Activated CD8-positive, alpha-beta memory T cell treated with anti-CD3 and anti-CD28 coated beads, Interleukin-2, amount 10 ng/mL, durations not matched to agents 7 days and 5 days (primary cell): ENCODE measurements at regions of chr12 and their contacts with region 1.

Region 1: DNA sequence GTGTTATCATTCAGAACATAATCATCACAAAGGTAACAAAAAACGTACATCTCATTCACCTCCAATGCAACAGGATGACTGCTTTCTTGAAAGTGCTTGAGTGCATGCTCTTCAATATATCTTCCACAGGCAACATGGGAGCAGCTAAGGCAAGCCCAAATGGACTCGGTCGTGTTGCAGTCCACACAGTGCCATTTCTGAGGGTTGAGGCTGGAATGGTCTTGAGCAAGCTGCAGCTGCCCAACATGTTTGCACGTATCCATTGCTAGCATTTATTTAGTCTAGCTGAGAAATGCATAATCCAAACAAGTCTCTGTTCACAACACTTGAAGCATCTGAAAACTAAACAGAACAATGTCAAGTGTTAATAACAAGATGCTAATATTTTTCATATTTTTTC is 17.3 kb downstream of the USP44 start:
- DNase-seq: no peak
- ATAC-seq: no peak
- H3K4me3 Mint-ChIP-seq: no peak overlapping the region
- H3K27ac Mint-ChIP-seq: no peak overlapping the region
- H3K4me1 Mint-ChIP-seq: peaks cover 2% of the 10 kb centered on the region
- H3K27me3 Mint-ChIP-seq: no peaks in the 10 kb centered on the region

Region 2: GRCh38 chr12:95117178-95117599 is 416.8 kb before region 1 on chr12:
- CTCF ChIA-PET with region 1: interaction called, 31 read pairs
- DNase-seq: peak; percentile 70
- ATAC-seq: peak; percentile 88
- H3K4me3 Mint-ChIP-seq: no peak overlapping the region
- H3K27ac Mint-ChIP-seq: no peak overlapping the region
- H3K4me1 Mint-ChIP-seq: peaks cover 10% of the 10 kb centered on the region
- H3K27me3 Mint-ChIP-seq: no peaks in the 10 kb centered on the region

Region 3: DNA sequence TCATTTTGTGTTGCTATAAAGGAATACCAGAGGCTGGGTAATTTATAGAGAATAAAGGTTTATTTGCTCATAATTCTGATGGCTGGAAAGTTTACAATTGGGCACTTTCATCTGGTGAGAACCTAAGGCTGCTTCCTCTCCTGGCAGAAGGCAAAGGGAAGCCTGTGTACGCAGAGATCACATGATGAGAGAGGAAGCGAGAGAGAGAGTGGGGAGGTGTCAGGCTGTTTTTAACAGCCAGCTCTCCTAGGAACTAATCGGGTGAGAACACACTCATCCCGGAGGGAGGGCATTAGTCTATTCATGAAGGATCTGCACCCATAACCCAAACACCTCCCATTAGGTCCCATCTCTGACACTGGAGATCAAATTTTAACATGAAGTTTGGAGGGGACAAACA is 105.5 kb before region 1 on chr12:
- CTCF ChIA-PET with region 1: no interaction called
- DNase-seq: peak; percentile 42
- ATAC-seq: peak; percentile 63
- H3K4me3 Mint-ChIP-seq: no peak overlapping the region
- H3K27ac Mint-ChIP-seq: no peak overlapping the region
- H3K4me1 Mint-ChIP-seq: peaks cover 7% of the 10 kb centered on the region
- H3K27me3 Mint-ChIP-seq: no peaks in the 10 kb centered on the region